ENCODE measurements at regions of chr3 and their contacts with region 1.

Region 1: DNA sequence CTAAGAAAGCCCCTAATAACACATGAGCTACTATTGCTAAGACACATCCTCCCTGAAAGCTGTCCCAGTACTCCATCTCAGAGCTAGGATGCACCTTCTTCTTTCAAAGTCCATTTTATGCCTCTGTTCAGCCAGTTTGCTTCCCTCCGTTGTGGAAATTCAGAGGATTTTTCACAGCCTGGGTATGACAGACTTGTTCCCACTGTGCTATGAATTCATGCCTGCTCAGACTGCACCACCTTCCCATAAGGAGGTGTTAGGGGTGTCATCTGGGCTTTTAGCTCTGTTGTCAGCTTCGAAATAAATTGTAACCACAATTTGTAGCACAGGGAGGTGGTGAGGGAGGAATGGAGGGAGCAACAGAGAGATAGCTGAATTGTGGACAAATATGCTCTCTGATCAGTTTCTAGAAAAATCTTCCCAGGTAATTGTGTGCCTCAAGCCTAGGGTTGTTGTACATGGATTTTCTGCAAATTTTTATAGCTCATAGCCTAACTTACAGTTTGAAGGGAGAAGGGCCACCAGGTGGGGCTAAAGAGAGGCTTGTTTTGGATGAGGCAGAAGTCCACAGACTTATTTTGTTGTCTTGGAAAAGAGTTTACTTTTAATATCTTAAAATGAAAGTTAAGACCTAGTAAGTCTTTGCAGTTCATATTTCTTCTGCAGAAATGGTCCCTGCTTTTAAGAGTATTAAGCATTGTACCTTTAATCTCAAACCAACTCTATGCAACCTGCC is 462.0 kb downstream of the PDCD6IP start:
- DNase-seq: peak; percentile 61
- H3K4me3 ChIP-seq: no peak overlapping the region
- H3K27ac ChIP-seq: no peak overlapping the region
- H3K4me1 ChIP-seq: no peaks in the 10 kb centered on the region
- H3K27me3 ChIP-seq: no peaks in the 10 kb centered on the region
- CTCF ChIP-seq: peak; percentile 57 to 63
- POLR2A ChIP-seq: no peak

Region 2: DNA sequence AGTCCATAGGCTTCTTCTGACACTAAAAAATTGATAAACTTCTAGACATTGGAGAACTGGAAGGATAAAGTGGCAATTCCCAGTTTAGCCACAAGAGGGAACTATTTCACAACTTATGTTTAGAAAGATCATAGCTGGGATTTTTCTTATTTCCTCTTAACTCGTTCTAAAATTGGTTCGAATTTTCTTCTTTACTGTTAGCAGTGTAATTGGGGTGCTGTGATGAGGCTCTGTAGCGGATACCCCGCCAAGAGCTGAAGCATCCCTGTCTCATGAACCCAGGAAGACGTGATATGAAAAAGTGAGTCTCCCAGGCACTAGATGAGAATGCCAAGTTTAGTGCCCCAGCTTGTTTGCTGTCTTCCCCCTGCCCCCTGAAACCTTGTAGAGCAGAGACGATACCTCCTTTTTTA is 376.9 kb before region 1 on chr3:
- CTCF ChIA-PET with region 1: interaction called, 17 read pairs
- POLR2A ChIA-PET with region 1: no interaction called
- dilution Hi-C with region 1: no loop called
- intact Hi-C with region 1: loop called (anchors 2 kb)
- DNase-seq: peak; percentile 66
- H3K4me3 ChIP-seq: no peak overlapping the region
- H3K27ac ChIP-seq: no peak overlapping the region
- H3K4me1 ChIP-seq: no peaks in the 10 kb centered on the region
- H3K27me3 ChIP-seq: peaks cover 0 to 7% of the 10 kb centered on the region in 2 experiments
- CTCF ChIP-seq: peak; percentile 47 to 48
- POLR2A ChIP-seq: no peak

Region 3: GRCh38 chr3:34056951-34057390 is 203.5 kb before region 1 on chr3:
- CTCF ChIA-PET with region 1: no interaction called
- POLR2A ChIA-PET with region 1: no interaction called
- dilution Hi-C with region 1: no loop called
- intact Hi-C with region 1: no loop called
- DNase-seq: no peak
- H3K4me3 ChIP-seq: no peak overlapping the region
- H3K27ac ChIP-seq: no peak overlapping the region
- H3K4me1 ChIP-seq: no peaks in the 10 kb centered on the region
- H3K27me3 ChIP-seq: no peaks in the 10 kb centered on the region
- CTCF ChIP-seq: no peak
- POLR2A ChIP-seq: no peak

Region 4: DNA sequence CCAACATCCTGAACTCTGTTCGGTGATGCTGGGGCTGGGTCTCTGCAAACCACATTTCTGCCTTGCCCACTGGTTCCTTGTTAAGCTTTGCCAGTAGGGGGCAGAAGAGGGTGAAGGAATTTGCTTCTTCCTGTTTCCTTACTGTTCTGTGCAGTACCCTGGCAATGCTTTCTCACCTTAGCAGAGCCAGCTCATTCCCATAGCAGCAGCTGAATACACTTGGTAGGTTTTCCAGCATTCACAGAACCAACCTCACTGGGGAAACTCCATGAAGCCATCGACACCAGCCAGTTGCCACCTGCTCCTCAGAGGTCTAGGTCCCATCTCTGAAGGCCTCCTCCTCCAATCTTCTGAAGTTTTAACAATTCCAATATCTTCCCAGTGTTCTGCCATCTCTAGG is 153.6 kb before region 1 on chr3:
- CTCF ChIA-PET with region 1: interaction called, 58 read pairs
- POLR2A ChIA-PET with region 1: no interaction called
- dilution Hi-C with region 1: no loop called
- intact Hi-C with region 1: loop called (anchors 2 kb)
- DNase-seq: peak; percentile 79
- H3K4me3 ChIP-seq: no peak overlapping the region
- H3K27ac ChIP-seq: no peak overlapping the region
- H3K4me1 ChIP-seq: no peaks in the 10 kb centered on the region
- H3K27me3 ChIP-seq: peaks cover 6 to 9% of the 10 kb centered on the region in 2 experiments
- CTCF ChIP-seq: peak; percentile 78 to 86
- POLR2A ChIP-seq: no peak

Region 5: DNA sequence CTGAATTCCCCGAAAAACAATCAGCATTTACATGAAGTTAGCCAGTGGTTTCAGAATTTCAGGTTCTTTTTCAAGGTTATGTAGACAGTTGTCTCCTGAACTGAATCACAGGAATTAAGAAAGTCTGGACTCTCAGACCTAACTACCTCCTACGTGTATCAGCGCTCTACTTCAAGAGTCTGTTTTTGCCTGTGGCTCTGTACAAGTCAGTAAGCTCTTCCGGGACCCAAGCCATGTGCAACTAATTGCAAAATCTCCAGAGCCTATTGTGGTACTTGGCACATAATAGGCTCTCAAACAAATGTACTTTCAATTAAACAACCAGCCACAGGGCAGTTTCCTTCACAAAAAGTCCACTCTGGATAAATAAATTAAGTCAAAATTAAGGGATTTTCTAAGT is 47.8 kb before region 1 on chr3:
- CTCF ChIA-PET with region 1: interaction called, 15 read pairs
- POLR2A ChIA-PET with region 1: no interaction called
- dilution Hi-C with region 1: no loop called
- intact Hi-C with region 1: no loop called
- DNase-seq: peak; percentile 42
- H3K4me3 ChIP-seq: no peak overlapping the region
- H3K27ac ChIP-seq: peak overlapping the region; percentile 14
- H3K4me1 ChIP-seq: peaks cover 39% of the 10 kb centered on the region
- H3K27me3 ChIP-seq: no peaks in the 10 kb centered on the region
- CTCF ChIP-seq: no peak
- POLR2A ChIP-seq: no peak

Region 6: DNA sequence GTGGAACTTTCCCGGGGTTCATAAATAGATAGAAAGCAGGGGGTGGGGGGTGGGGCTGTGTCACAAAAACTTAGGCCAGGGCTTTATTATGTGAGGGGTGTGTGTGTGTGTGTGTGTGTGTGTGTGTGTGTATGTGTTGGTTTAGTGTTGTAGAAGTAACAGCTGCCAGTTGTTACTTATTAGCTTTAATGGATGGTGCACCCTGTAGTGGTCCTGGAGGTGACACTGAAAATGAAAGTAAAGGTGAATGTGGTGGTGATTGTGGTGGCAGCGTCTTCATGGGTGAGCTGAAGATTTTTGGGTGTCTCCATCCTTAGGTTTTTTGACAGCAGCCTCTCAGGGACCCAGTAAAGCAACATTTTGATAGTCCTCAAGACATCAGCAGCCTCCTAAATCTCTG is 12.1 kb before region 1 on chr3:
- CTCF ChIA-PET with region 1: interaction called, 52 read pairs
- POLR2A ChIA-PET with region 1: no interaction called
- dilution Hi-C with region 1: no loop called
- intact Hi-C with region 1: no loop called
- DNase-seq: no peak
- H3K4me3 ChIP-seq: no peak overlapping the region
- H3K27ac ChIP-seq: no peak overlapping the region
- H3K4me1 ChIP-seq: no peaks in the 10 kb centered on the region
- H3K27me3 ChIP-seq: no peaks in the 10 kb centered on the region
- CTCF ChIP-seq: no peak
- POLR2A ChIP-seq: no peak

Region 7: GRCh38 chr3:34683851-34684250 is 423.4 kb after region 1 on chr3:
- CTCF ChIA-PET with region 1: interaction called, 47 read pairs
- POLR2A ChIA-PET with region 1: no interaction called
- dilution Hi-C with region 1: no loop called
- intact Hi-C with region 1: loop called (anchors 1 kb)
- DNase-seq: peak; percentile 42
- H3K4me3 ChIP-seq: no peak overlapping the region
- H3K27ac ChIP-seq: no peak overlapping the region
- H3K4me1 ChIP-seq: no peaks in the 10 kb centered on the region
- H3K27me3 ChIP-seq: no peaks in the 10 kb centered on the region
- CTCF ChIP-seq: peak; percentile 39 to 58
- POLR2A ChIP-seq: no peak

Region 8: GRCh38 chr3:35946121-35946853 is 1685.8 kb after region 1 on chr3:
- CTCF ChIA-PET with region 1: interaction called, 37 read pairs
- POLR2A ChIA-PET with region 1: no interaction called
- dilution Hi-C with region 1: no loop called
- intact Hi-C with region 1: loop called (anchors 10 kb)
- DNase-seq: peak; percentile 59
- H3K4me3 ChIP-seq: no peak overlapping the region
- H3K27ac ChIP-seq: no peak overlapping the region
- H3K4me1 ChIP-seq: peaks cover 10% of the 10 kb centered on the region
- H3K27me3 ChIP-seq: peaks cover 5 to 11% of the 10 kb centered on the region in 2 experiments
- CTCF ChIP-seq: peak; percentile 20 to 50
- POLR2A ChIP-seq: no peak